A549 (cell line): ENCODE measurements at regions of chr11 and their contacts with region 1.

Region 1: GRCh38 chr11:60913793-60914632 is at the start of gene TMEM109:
- DNase-seq: peak; percentile 87 to 94
- ATAC-seq: peak; percentile 79 to 89
- H3K4me3 ChIP-seq: peak within 1 kb of the TSS; percentile 76
- H3K27ac ChIP-seq: peak within 1 kb of the TSS; percentile 91 to 94
- H3K4me1 ChIP-seq: peaks cover 21% of the 10 kb centered on the region
- CTCF ChIP-seq: no peak
- EP300 ChIP-seq: no peak
- POLR2A ChIP-seq: peak; percentile 71
- RAD21 ChIP-seq: no peak
- polyA plus RNA-seq, gene TMEM109: 40.9 and 58.0 TPM in 2 replicates

Region 2: DNA sequence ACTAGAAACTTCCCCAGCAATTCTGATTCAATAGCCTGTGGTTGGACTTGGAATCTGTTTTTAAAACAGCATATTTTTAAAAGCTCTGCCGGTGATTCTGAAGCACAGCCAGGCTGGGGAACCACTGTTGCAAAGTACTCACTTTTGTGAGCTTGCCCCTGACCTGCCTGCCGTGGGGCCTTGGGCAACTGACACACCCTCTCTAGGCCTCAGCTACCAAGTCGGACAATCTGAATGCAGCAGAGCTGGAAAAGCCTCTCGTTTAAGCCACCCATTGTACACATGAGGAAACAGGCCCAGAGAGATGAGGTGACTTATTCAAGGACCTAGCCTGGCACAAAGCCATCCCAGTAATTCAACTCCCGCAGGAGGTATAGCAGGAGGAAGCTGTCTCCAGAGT is 29.1 kb after region 1 on chr11:
- CTCF ChIA-PET with region 1: interaction called, 10 read pairs
- POLR2A ChIA-PET with region 1: no interaction called
- DNase-seq: no peak
- ATAC-seq: no peak
- H3K4me3 ChIP-seq: no peak overlapping the region
- H3K27ac ChIP-seq: no peak overlapping the region
- H3K4me1 ChIP-seq: no peaks in the 10 kb centered on the region
- CTCF ChIP-seq: no peak
- EP300 ChIP-seq: no peak
- POLR2A ChIP-seq: no peak
- RAD21 ChIP-seq: no peak

Region 3: GRCh38 chr11:60978546-60979380 is 64.8 kb after region 1 on chr11:
- CTCF ChIA-PET with region 1: no interaction called
- POLR2A ChIA-PET with region 1: no interaction called
- DNase-seq: no peak
- ATAC-seq: no peak
- H3K4me3 ChIP-seq: no peak overlapping the region
- H3K27ac ChIP-seq: no peak overlapping the region
- H3K4me1 ChIP-seq: no peaks in the 10 kb centered on the region
- CTCF ChIP-seq: no peak
- EP300 ChIP-seq: no peak
- POLR2A ChIP-seq: no peak
- RAD21 ChIP-seq: no peak

Region 4: DNA sequence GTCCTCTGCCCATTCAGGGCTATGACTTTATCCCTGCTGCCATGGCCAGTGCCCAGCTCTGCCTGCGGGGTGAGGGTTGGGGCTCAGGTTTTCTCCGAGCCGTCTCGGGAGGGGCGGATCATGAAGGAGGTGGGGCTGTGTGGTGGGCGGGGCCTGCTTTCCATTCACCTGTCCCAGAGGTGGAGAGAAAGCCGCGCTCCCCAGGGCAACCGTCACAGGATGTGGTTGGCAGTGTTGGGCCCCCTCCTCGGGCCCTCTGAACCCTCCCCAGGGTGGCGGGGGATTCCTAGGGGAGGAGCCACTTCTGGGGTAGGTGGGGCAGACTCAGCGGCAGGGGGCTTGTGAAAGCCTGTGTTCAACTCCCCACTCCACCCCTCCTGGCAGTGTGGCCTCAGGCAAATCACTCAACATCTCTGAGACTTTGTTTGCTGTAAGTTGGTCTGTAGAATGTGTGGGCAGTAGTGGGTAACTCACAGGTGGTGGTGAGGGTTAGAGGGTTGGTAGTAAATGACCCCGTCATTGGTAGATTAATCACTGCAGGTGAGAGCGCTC is 107.7 kb after region 1 on chr11:
- CTCF ChIA-PET with region 1: no interaction called
- POLR2A ChIA-PET with region 1: no interaction called
- DNase-seq: no peak
- ATAC-seq: no peak
- H3K4me3 ChIP-seq: no peak overlapping the region
- H3K27ac ChIP-seq: no peak overlapping the region
- H3K4me1 ChIP-seq: no peaks in the 10 kb centered on the region
- CTCF ChIP-seq: no peak
- EP300 ChIP-seq: no peak
- POLR2A ChIP-seq: no peak
- RAD21 ChIP-seq: no peak